ENCODE measurements at regions of chr3 and their contacts with region 1.

Region 1: GRCh38 chr3:194344012-194344411 is 7.1 kb downstream of the CPN2 start:
- DNase-seq: peak; percentile 78
- ATAC-seq: peak; percentile 61
- H3K4me3 ChIP-seq: no peak overlapping the region
- H3K4me3 Mint-ChIP-seq: no peak overlapping the region
- H3K27ac ChIP-seq: no peak overlapping the region
- H3K27ac Mint-ChIP-seq: no peak overlapping the region
- H3K4me1 ChIP-seq: peaks cover 0 to 3% of the 10 kb centered on the region in 2 donors
- H3K4me1 Mint-ChIP-seq: peaks cover 8% of the 10 kb centered on the region
- H3K27me3 ChIP-seq: peaks cover 0 to 17% (median 0%) of the 10 kb centered on the region in 4 experiments
- H3K27me3 Mint-ChIP-seq: peaks cover 25% of the 10 kb centered on the region
- CTCF ChIP-seq: peak; percentile 98

Region 2: DNA sequence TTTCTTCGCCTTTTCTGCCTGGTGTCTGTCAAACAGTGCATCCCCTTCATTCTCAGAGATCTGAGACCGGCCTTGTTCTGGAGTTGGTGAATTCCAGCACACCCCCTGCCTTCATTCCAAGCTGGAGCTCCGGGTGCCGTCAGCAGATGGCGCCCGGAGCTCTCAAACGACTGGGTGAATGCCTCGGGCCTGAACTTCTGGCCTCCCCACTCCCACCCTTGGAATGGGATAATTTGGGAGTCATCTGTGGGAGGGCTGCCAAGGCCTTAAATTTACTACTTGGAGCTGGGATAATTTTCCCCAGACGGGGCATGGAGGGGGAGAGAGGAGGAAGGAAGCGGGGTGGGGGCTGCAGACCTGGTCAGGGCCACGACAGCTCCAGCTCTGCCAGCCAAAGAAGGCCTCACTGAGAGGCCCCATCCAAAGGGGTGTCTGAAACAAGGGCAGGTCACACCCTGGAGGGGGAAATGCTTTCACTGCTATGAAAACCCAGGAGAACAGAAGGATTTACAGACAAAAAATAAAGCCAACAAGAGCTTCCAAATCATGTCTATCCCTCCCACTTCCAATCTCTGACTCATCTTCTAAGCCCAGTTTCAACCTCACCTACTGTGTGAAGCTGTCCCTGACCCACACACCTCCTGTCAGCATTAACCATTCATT is 563.1 kb before region 1 on chr3:
- CTCF ChIA-PET with region 1: interaction called, 43 read pairs
- POLR2A ChIA-PET with region 1: no interaction called
- intact Hi-C with region 1: loop called (anchors 1 kb)
- DNase-seq: peak; percentile 63
- ATAC-seq: peak; percentile 45
- H3K4me3 ChIP-seq: no peak overlapping the region
- H3K4me3 Mint-ChIP-seq: no peak overlapping the region
- H3K27ac ChIP-seq: no peak overlapping the region
- H3K27ac Mint-ChIP-seq: no peak overlapping the region
- H3K4me1 ChIP-seq: peaks cover 12% of the 10 kb centered on the region in 2 donors
- H3K4me1 Mint-ChIP-seq: peaks cover 12% of the 10 kb centered on the region
- H3K27me3 ChIP-seq: peaks cover 0 to 61% (median 28%) of the 10 kb centered on the region in 4 experiments
- H3K27me3 Mint-ChIP-seq: peaks cover 59% of the 10 kb centered on the region
- CTCF ChIP-seq: peak; percentile 59

Region 3: GRCh38 chr3:194333212-194333980 is 10.6 kb before region 1 on chr3:
- CTCF ChIA-PET with region 1: interaction called, 112 read pairs
- POLR2A ChIA-PET with region 1: no interaction called
- intact Hi-C with region 1: loop called (anchors 1 kb)
- DNase-seq: peak; percentile 91
- ATAC-seq: peak; percentile 96
- H3K4me3 ChIP-seq: peak overlapping the region in 4 of 5 experiments; percentile 15 to 62 (median 31)
- H3K4me3 Mint-ChIP-seq: peak overlapping the region; percentile 79
- H3K27ac ChIP-seq: no peak overlapping the region
- H3K27ac Mint-ChIP-seq: no peak overlapping the region
- H3K4me1 ChIP-seq: peaks cover 9 to 10% of the 10 kb centered on the region in 2 donors
- H3K4me1 Mint-ChIP-seq: peaks cover 7% of the 10 kb centered on the region
- H3K27me3 ChIP-seq: peaks cover 0 to 28% (median 7%) of the 10 kb centered on the region in 4 experiments
- H3K27me3 Mint-ChIP-seq: peaks cover 45% of the 10 kb centered on the region
- CTCF ChIP-seq: peak; percentile 99

Region 4: GRCh38 chr3:194364652-194365434 is 20.8 kb after region 1 on chr3:
- CTCF ChIA-PET with region 1: interaction called, 14 read pairs
- POLR2A ChIA-PET with region 1: no interaction called
- intact Hi-C with region 1: no loop called
- DNase-seq: no peak
- ATAC-seq: no peak
- H3K4me3 ChIP-seq: no peak overlapping the region
- H3K4me3 Mint-ChIP-seq: no peak overlapping the region
- H3K27ac ChIP-seq: no peak overlapping the region
- H3K27ac Mint-ChIP-seq: no peak overlapping the region
- H3K4me1 ChIP-seq: no peaks in the 10 kb centered on the region
- H3K4me1 Mint-ChIP-seq: no peaks in the 10 kb centered on the region
- H3K27me3 ChIP-seq: peaks cover 0 to 18% (median 5%) of the 10 kb centered on the region in 4 experiments
- H3K27me3 Mint-ChIP-seq: peaks cover 30% of the 10 kb centered on the region
- CTCF ChIP-seq: no peak

Measured in B cell (primary cell).